ENCODE measurements at regions of chr5 and their contacts with region 1.

Region 1: GRCh38 chr5:93582677-93583438 is at the start of gene NR2F1:
- DNase-seq: no peak
- ATAC-seq: peak in 2 of 4 donors; percentile 23 to 28
- H3K4me3 ChIP-seq: peak within 1 kb of the TSS in 10 of 12 donors; percentile 40 to 74 (median 53)
- H3K27ac ChIP-seq: peak within 1 kb of the TSS in 2 of 12 donors; percentile 24 to 60
- H3K4me1 ChIP-seq: peaks cover 5 to 57% (median 28%) of the 10 kb centered on the region in 12 donors
- H3K27me3 ChIP-seq: peaks cover 52 to 86% (median 74%) of the 10 kb centered on the region in 9 donors
- CTCF ChIP-seq: no peak
- POLR2A ChIP-seq: no peak
- total RNA-seq, gene NR2F1: 0.37 to 13.5 (median 0.68) TPM in 6 of 9 donors, not detected in the others

Region 2: DNA sequence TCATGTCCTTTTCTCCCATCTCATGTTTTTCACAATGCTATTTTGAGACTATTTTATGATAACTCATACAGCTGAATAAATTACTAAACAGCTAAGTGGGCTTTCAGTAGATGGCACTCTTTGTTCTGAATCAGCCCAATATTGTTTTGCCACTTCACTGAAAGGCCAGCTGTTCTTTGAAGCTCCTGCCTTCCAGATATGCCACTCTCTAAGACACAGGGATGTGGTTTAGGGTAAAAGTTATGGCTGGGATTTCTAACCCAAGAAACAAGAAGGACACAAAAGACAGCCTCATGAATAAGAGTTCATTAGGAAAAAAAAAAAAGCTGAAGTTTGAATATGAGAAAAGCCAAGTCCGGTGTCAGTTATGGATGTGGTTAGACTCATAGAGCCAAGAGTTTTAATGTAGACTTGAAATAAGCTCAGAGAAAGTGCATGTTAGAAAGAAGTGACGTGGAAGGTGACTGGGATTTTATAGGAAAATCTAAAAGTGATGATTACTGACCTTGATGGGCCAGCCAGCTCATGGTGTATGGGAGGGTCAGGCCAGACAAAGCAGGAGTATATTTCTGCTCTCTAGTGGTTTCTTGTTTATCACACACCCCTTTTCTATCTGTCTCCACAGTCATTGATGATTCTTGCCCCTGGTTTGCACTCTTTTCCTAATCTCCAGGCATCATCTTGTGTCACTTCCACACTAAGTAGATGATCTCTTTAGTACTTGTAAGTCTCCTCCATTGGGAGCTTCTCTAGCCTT is 490.3 kb before region 1 on chr5:
- intact Hi-C with region 1: loop called in 3 of 10 experiments (anchors 5 to 10 kb)
- DNase-seq: no peak
- ATAC-seq: no peak
- H3K4me3 ChIP-seq: no peak overlapping the region
- H3K27ac ChIP-seq: no peak overlapping the region
- H3K4me1 ChIP-seq: peaks cover 0 to 13% (median 1%) of the 10 kb centered on the region in 12 donors
- H3K27me3 ChIP-seq: no peaks in the 10 kb centered on the region
- CTCF ChIP-seq: peak in 4 of 12 donors; percentile 26 to 40 (median 33)
- POLR2A ChIP-seq: no peak

Region 3: GRCh38 chr5:93635991-93636390 is 53.1 kb after region 1 on chr5:
- intact Hi-C with region 1: no loop called
- DNase-seq: no peak
- ATAC-seq: no peak
- H3K4me3 ChIP-seq: no peak overlapping the region
- H3K27ac ChIP-seq: no peak overlapping the region
- H3K4me1 ChIP-seq: no peaks in the 10 kb centered on the region
- H3K27me3 ChIP-seq: no peaks in the 10 kb centered on the region
- CTCF ChIP-seq: no peak
- POLR2A ChIP-seq: no peak

Region 4: GRCh38 chr5:93800988-93801811 is 218.3 kb after region 1 on chr5:
- intact Hi-C with region 1: loop called in 9 of 10 experiments (anchors 2 to 5 kb)
- DNase-seq: no peak
- ATAC-seq: no peak
- H3K4me3 ChIP-seq: no peak overlapping the region
- H3K27ac ChIP-seq: no peak overlapping the region
- H3K4me1 ChIP-seq: peaks cover 0 to 5% (median 0%) of the 10 kb centered on the region in 12 donors
- H3K27me3 ChIP-seq: no peaks in the 10 kb centered on the region
- CTCF ChIP-seq: peak; percentile 56 to 81 (median 67)
- POLR2A ChIP-seq: no peak

Region 5: DNA sequence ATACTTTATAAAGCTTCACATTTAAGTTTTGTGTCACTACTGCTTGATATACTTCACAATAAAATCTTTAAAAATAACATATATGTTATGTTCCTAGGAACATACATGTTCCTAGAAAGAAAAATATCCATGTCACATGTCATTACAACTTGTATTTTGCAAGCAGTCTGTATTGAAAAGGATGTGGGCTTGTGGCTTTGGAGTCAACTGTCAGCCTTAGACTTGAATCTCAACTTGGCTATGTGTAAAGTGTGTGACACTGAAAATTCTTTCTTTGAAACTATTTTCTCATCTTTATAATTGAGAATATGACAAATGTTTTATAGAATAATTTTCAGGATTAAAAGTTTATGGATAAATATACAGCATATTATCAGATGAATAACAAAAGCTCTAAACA is 762.4 kb after region 1 on chr5:
- intact Hi-C with region 1: no loop called
- DNase-seq: no peak
- ATAC-seq: no peak
- H3K4me3 ChIP-seq: no peak overlapping the region
- H3K27ac ChIP-seq: no peak overlapping the region
- H3K4me1 ChIP-seq: no peaks in the 10 kb centered on the region
- H3K27me3 ChIP-seq: no peaks in the 10 kb centered on the region
- CTCF ChIP-seq: no peak
- POLR2A ChIP-seq: no peak

Region 6: GRCh38 chr5:94731471-94731870 is 1148.6 kb after region 1 on chr5:
- intact Hi-C with region 1: loop called in 2 of 10 experiments (anchors 5 to 10 kb)
- DNase-seq: no peak
- ATAC-seq: no peak
- H3K4me3 ChIP-seq: no peak overlapping the region
- H3K27ac ChIP-seq: no peak overlapping the region
- H3K4me1 ChIP-seq: no peaks in the 10 kb centered on the region
- H3K27me3 ChIP-seq: no peaks in the 10 kb centered on the region
- CTCF ChIP-seq: no peak
- POLR2A ChIP-seq: no peak